Left ventricle myocardium inferior (tissue), 1 donor: ENCODE measurements at regions of chr20 and their contacts with region 1.

Region 1: DNA sequence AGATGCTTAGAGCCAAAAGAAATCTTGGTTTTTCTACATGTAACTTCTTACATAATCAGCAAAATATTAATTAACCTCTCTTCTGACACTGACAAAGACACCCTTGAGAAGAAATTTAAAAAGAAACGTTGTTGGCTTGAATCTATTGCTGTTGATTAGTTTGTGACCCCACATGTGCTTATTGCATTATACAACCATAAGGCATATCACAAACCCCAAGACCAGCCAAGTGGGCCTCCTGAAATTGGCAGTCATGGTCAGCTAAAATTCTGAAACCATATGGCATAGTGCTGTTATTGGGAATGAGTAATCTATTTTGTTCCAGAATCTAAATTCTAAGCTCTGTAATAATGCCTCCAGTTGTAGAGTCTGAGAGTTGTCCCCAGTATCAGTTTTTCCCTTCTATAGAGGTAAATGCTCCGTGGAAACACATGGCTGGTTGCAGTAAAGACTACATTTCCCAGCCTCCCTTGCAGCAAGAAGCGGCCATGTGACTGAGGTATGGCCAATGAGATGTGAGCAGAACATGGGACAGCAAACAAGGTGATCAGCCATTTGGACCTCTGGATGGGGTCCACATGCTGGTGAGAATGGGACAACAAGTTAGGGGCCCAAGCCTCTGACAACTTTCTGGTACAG is 42.3 kb upstream of the PTPN1 start:
- DNase-seq: no peak
- H3K4me3 ChIP-seq: no peak overlapping the region
- H3K27ac ChIP-seq: no peak overlapping the region
- H3K4me1 ChIP-seq: peaks cover 18% of the 10 kb centered on the region
- H3K27me3 ChIP-seq: no peaks in the 10 kb centered on the region
- CTCF ChIP-seq: no peak

Region 2: DNA sequence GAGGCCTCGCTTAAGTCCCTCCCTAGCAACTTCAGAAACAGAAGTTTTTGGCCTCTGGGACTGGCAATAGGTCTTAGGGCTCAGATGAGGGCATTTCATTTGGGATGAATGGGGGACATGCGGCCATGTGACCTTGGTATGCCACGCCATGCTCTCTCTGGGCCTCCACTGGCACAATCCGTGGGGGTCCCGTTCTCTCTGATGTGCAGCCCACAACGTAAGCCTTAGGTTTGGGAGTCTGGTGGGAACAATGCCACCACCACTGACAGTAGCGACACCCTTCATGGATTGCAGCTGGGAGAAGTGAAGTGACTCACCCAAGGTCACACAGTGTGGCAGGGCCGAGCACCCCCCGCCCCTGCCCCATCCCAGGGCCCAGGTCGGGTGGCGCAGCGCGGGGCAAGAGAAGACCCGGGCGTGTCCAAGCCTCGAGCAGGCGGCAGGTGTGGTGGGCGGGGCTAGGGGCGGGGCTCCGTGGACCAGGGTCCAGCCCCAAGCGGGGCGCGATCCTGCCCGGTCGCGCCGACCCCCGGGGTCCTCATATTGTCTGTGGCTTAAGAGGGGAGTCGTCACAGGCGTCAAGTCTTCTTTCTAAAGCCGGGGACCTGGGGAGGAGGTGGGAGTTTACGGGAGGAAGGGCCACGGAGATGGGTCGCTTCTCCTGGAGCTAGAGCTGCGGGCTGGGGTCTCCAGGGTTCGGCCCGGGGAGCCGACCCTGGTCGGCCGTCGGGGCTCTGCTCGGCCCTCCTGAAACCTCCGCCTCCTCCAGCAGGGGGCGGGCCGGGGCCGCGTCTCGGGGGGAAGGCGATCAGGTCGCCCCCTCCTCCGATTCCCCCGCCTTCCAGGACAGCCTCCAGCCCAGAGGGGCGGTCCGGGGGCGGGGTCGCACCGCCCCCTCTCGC is 277.9 kb before region 1 on chr20:
- intact Hi-C with region 1: loop called (anchors 2 kb)
- DNase-seq: peak; percentile 88
- H3K4me3 ChIP-seq: peak overlapping the region; percentile 94
- H3K27ac ChIP-seq: peak overlapping the region; percentile 99
- H3K4me1 ChIP-seq: peaks cover 53% of the 10 kb centered on the region
- H3K27me3 ChIP-seq: no peaks in the 10 kb centered on the region
- CTCF ChIP-seq: peak; percentile 82

Region 3: DNA sequence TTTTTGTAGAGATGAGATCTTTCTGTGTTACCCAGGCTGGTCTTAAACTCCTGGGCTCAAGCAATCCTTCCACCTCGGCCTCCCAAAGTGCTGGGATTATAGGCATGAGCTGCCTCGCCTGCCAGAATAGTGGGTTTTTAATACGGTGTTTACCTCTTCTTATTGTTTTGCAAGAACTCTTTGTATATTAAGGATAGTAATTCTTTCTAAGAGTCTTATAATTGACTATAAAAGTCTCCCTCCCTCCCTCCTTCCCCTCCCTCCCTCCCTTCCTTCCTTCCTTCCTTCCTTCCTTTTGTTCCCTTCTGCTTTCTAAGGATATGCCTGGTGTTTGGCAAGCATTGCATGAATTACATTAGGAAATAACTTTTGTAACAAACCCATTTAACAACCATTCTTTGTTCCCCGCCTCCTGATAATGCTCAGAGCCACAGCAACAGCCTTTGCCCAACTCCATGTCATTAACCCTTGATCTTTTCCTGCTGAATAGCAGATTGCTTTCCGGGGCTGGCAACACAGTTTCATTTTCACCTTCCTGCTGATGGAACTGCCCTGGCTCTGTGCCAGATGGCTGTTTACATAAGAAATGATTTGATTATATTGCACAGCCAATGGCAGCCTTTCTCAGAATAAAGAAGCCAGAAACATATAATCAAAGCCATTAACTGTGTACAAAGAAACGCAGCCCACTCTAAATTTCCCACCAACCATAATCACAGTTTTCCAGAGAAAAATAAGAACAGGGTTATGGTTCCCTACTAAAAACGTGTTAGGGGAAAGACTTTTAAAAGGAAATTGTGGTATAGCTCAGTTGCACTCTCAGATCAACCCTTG is 101.3 kb before region 1 on chr20:
- intact Hi-C with region 1: no loop called
- DNase-seq: no peak
- H3K4me3 ChIP-seq: no peak overlapping the region
- H3K27ac ChIP-seq: peak overlapping the region; percentile 19
- H3K4me1 ChIP-seq: peaks cover 16% of the 10 kb centered on the region
- H3K27me3 ChIP-seq: no peaks in the 10 kb centered on the region
- CTCF ChIP-seq: no peak